Common myeloid progenitor, CD34-positive (primary cell): ENCODE measurements at regions of chr1 and their contacts with region 1.

Region 1: DNA sequence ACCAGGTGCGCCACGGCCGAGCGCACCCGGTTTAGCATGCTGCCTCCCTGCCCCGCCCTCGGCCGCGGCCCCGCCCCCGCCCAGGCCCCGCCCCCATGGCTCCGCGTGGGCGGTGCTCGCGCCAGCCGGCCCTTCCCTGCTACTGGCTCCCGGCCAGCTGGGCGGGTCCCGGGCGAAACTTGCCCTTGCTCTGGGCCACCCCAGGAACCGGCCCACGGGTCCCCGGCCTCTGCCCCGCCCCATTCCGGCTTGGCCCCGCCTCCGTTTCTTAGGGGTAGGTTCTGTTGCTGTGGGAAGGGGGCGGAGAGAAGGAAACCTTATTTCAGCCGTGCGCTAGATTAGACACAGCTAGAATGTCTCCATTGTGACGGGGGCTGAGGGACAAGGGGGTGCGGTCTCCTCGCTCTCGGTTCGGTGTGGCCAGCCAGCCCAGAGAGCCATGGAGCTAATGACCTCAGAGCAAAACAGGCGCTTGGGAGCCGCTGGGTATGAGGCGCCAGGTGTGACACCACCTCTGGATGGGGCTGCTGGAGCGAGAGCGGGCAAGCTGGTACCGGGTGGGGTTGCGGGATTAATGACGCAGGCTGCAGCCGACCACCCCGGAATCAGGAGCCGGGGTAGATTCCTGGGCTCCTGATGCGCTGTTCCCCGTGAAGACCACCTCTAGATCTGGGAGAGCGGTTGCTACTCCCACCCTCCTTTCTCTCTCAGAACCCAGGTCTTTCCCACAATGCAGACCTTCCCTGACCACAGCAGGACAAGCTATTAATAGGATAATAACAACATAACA is at the start of gene PPM1J:
- DNase-seq: peak; percentile 90 to 96 (median 96)
- H3K4me3 ChIP-seq: peak within 1 kb of the TSS; percentile 32 to 89 (median 70)
- H3K27ac ChIP-seq: no peak within 1 kb of the TSS
- H3K4me1 ChIP-seq: peaks cover 0 to 32% (median 29%) of the 10 kb centered on the region in 4 experiments
- H3K27me3 ChIP-seq: peaks cover 0 to 33% (median 3%) of the 10 kb centered on the region in 5 experiments

Region 2: GRCh38 chr1:112700290-112701226 is 14.9 kb before region 1 on chr1:
- CTCF ChIA-PET with region 1: interaction called, 30 read pairs
- POLR2A ChIA-PET with region 1: no interaction called
- DNase-seq: peak; percentile 92 to 96 (median 96)
- H3K4me3 ChIP-seq: peak overlapping the region in 5 of 7 experiments; percentile 13 to 53 (median 36)
- H3K27ac ChIP-seq: peak overlapping the region; percentile 61 to 88
- H3K4me1 ChIP-seq: peaks cover 11 to 55% (median 46%) of the 10 kb centered on the region in 4 experiments
- H3K27me3 ChIP-seq: no peaks in the 10 kb centered on the region

Region 3: GRCh38 chr1:112744009-112744578 is 28.6 kb after region 1 on chr1:
- CTCF ChIA-PET with region 1: interaction called, 10 read pairs
- POLR2A ChIA-PET with region 1: no interaction called
- DNase-seq: peak; percentile 28 to 31 (median 29)
- H3K4me3 ChIP-seq: peak overlapping the region in 3 of 7 experiments; percentile 24 to 40 (median 26)
- H3K27ac ChIP-seq: no peak overlapping the region
- H3K4me1 ChIP-seq: peaks cover 0 to 11% (median 9%) of the 10 kb centered on the region in 4 experiments
- H3K27me3 ChIP-seq: peaks cover 8 to 82% (median 22%) of the 10 kb centered on the region in 5 experiments

Region 4: GRCh38 chr1:112803906-112804762 is 88.7 kb after region 1 on chr1:
- CTCF ChIA-PET with region 1: interaction called, 268 read pairs
- POLR2A ChIA-PET with region 1: no interaction called
- DNase-seq: peak; percentile 64 to 81 (median 74)
- H3K4me3 ChIP-seq: no peak overlapping the region
- H3K27ac ChIP-seq: no peak overlapping the region
- H3K4me1 ChIP-seq: no peaks in the 10 kb centered on the region
- H3K27me3 ChIP-seq: peaks cover 0 to 3% (median 0%) of the 10 kb centered on the region in 5 experiments